HepG2 (cell line): ENCODE measurements at regions of chr16 and their contacts with region 1.

Region 1: DNA sequence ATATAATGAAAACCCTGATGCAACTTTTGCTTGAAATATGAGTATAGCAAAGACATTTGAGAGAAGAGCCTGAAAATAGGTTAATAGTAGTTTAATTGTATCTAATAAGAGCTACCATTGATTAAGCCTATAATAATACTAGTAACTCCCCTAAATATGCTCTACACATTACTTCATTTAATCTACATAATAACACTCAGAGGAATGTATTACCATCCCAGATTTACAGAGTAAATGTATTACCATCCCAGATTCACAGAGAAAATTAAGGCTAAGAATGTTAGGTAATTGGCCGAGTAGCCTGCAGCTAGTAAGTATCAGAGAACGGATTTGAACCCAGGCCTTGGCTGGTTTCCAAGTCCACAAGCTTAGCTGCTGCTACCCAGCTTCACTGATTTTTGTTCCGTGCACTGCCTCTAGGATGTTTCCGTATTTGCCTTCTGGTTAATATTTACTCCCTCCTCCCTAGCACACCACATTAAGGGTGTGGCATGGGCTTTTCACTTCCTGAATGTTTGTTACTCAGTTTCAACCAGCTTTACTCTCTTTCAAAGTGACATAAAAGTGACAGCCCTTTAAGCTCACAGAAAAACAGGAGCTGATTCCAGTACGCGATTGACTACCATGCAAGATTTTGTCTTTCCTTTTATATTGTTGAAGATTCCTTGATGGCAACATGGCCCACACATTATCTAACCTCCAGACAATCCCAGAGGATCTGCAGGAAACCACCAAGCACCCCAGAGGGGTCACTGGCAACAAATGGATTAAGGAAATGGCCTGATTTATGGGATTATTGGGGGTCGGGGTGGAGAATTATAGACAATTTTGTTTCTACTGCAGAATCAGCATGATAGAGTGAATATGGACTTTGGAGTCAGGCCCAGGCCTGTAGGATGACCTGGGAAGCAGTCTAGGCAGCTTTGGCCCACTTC is 26.7 kb upstream of the TOX3 start:
- DNase-seq: peak; percentile 95
- ATAC-seq: peak; percentile 95
- H3K4me3 ChIP-seq: peak overlapping the region in 2 of 3 experiments; percentile 11 to 36; a peak in 4 of 6 replicates
- H3K27ac ChIP-seq: peak overlapping the region; percentile 71
- H3K4me1 ChIP-seq: peaks cover 100% of the 10 kb centered on the region
- H3K27me3 ChIP-seq: no peaks in the 10 kb centered on the region
- CTCF ChIP-seq: no peak
- EP300 ChIP-seq: peak in 1 of 2 experiments; percentile 92; a peak in 2 of 4 replicates
- POLR2A ChIP-seq: peak in 1 of 2 experiments; percentile 48; a peak in 1 of 4 replicates
- RAD21 ChIP-seq: no peak

Region 2: DNA sequence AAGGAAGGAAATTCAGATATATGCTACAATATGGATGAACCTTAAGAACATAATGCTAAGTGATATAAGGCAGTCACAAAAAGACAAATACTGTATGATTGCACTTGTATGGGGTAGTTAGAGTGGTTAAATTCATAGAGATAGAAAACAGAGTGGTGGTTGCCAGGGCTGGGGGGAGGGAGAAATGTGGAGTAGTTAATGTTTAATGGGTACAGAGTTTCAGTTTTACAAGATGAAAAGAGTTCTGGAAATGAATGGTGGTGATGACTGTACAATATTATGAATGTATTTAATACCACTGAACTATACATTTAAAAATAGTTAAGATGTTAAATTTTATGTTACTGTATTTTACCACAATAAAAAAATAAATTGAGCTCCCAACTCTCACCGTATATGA is 184.6 kb before region 1 on chr16:
- CTCF ChIA-PET with region 1: no interaction called
- POLR2A ChIA-PET with region 1: no interaction called
- in situ Hi-C with region 1: no loop called
- intact Hi-C with region 1: no loop called
- DNase-seq: peak; percentile 59
- ATAC-seq: peak; percentile 78
- H3K4me3 ChIP-seq: no peak overlapping the region
- H3K27ac ChIP-seq: no peak overlapping the region
- H3K4me1 ChIP-seq: peaks cover 32% of the 10 kb centered on the region
- H3K27me3 ChIP-seq: no peaks in the 10 kb centered on the region
- CTCF ChIP-seq: no peak
- EP300 ChIP-seq: no peak
- POLR2A ChIP-seq: no peak
- RAD21 ChIP-seq: no peak

Region 3: GRCh38 chr16:52561910-52562741 is 11.5 kb before region 1 on chr16:
- CTCF ChIA-PET with region 1: no interaction called
- POLR2A ChIA-PET with region 1: interaction called, 19 read pairs
- in situ Hi-C with region 1: no loop called
- intact Hi-C with region 1: no loop called
- DNase-seq: peak; percentile 54
- ATAC-seq: peak; percentile 55
- H3K4me3 ChIP-seq: peak overlapping the region; percentile 27 to 51 (median 40)
- H3K27ac ChIP-seq: peak overlapping the region; percentile 23
- H3K4me1 ChIP-seq: peaks cover 100% of the 10 kb centered on the region
- H3K27me3 ChIP-seq: no peaks in the 10 kb centered on the region
- CTCF ChIP-seq: 0 out of 2 replicates have a peak, but pooled peaks have one; percentile 3
- EP300 ChIP-seq: peak in 1 of 2 experiments; percentile 78; a peak in 2 of 4 replicates
- POLR2A ChIP-seq: no peak
- RAD21 ChIP-seq: no peak

Region 4: DNA sequence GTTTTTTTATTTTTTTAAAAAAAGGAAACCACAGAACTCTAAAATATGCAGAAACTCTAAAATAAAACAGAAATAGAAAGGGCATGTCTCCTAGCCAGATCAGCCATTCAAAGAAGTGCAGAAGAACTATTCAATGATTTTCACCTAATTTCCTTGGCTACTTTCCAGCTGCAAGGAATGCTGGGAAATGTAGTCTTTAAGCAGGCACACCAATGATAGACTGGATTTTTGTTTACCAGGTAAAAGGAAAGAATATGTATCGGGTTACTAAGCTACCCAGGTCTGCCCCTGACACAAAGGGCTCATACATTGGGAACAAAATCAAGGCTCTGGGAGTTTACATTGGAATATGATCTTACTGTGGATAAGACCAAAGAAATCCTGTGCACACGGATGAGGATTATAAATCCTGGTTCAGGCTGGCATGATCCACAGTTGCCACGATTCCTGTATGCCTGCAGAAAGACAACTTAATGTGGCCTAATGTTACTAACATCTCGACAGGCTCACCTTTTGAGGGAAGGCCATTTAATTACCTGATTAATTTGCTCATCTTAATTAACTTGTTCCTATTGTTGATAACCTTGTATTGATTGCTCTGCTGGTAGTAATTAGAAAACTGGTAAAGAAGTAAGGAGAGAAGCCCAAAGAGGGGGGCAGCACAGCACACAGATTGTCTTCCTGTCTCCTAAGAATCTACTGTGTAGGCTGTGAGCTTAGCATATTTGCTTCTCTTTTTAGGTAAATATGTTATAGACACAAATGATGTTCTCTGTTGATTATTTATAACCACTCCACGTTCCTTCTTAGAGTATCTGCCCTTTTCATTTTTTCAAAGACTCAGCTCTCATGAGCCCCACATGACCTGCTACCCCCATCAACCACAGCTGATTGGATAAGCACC is 24.2 kb after region 1 on chr16:
- CTCF ChIA-PET with region 1: no interaction called
- POLR2A ChIA-PET with region 1: interaction called, 9 read pairs
- in situ Hi-C with region 1: no loop called
- intact Hi-C with region 1: loop called (anchors 2 kb)
- DNase-seq: peak; percentile 99
- ATAC-seq: peak; percentile 100
- H3K4me3 ChIP-seq: peak overlapping the region in 1 of 3 experiments; percentile 23; a peak in 1 of 6 replicates
- H3K27ac ChIP-seq: peak overlapping the region; percentile 42
- H3K4me1 ChIP-seq: peaks cover 52% of the 10 kb centered on the region
- H3K27me3 ChIP-seq: no peaks in the 10 kb centered on the region
- CTCF ChIP-seq: no peak
- EP300 ChIP-seq: peak in 1 of 2 experiments; percentile 81; a peak in 2 of 4 replicates
- POLR2A ChIP-seq: no peak
- RAD21 ChIP-seq: no peak